ENCODE measurements at regions of chr10 and their contacts with region 1.

Region 1: DNA sequence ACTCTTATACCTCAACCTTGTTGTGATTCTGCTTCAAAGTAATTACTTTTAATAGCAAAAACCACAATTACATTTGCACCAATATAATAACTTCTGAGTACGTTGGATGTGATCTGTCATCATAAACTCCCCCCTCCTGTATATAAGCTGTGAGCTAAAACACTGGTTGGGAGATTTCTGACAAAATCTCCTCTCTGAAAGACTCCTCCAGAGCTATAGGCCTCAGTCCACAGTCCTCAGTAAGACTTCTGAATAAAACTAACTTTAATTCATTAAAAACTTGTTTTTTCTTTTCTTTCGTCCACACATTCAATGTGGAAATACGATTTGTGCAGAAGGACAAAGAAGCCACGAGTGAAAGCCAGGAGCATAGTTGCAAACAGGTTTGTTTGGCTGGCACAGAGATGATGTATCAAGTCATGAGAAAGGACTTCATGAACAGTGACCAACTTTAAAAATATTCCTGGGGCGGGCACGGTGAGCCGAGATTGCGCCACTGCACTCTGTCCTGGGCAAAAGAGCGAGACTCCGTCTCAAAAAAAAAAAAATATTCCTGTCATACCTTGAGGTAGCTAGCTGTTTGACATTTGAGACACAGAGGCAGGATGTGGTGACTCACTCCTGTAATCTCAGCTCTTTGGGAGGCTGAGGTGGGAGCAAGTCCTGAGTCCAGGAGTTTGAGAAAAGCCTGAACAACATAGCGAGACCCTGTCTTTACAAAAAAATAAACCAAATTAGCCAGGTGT is 91.1 kb upstream of the ARHGAP21 start:
- DNase-seq: no peak

Region 2: DNA sequence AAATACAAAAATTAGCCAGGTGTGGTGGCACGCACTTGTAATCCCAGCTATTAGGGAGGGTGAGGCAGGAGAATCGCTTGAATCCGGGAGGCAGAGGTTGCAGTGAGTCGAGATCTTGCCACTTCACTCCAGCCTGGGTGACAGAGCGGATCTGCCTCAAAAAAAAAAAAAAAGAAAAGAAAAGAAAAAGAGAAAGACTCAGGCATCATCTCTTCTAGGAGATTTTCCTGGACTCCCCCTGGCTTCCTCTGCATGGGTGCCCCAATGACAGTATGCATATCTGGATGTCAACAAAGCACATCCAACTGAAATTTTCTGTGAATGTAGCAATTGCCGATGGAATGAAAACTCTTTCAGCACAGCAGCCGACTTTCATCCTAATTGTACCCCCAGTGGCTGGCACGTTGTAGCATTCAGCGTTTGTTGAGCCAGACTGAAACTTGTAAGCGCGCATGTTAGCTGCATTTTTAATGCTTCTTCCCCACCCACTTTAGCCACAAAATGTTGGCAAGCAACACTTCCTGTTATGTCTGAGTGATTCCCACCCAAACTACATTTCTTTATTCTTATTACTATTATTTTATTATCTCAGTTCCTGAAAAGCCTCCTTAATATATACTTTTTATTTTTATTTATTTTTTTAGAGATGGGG is 67.4 kb after region 1 on chr10:
- intact Hi-C with region 1: loop called in 1 of 2 experiments (anchors 2 kb)
- DNase-seq: no peak

Region 3: DNA sequence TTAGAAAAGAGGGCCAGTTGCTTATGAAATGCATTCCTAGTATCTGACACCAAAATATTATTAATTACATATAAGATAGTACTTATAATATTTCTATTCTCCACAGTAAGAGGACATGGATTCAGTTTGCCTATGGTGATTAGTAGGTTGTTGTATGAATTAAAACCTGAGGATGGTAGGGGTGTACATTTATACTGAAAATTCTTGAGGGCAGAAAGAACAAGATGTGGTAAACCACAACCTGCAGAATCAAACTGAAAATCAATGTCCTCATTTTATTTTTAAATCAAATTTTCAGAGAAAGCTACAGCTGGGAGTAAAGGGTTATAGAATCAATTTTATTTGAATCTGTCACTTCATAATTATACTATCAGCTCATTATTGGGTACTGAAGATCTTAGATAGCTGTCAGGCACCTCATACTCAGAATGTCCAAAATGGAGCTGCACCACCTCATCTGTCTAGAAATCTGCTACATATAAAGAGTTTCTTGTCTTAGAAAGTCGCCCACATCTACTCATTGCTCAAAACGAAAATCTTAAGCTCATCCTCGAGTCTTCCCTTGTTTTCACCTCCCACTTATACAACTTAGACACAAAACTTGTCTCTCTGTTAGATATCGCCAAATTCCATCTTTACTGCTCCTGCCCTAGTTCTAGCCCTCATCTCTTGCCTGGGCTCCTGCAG is 1184.7 kb after region 1 on chr10:
- intact Hi-C with region 1: no loop called
- DNase-seq: no peak